ENCODE measurements at regions of chr1 and their contacts with region 1.

Region 1: GRCh38 chr1:213244664-213245091 is 193.6 kb downstream of the RPS6KC1 start:
- DNase-seq: peak; percentile 64
- H3K4me3 Mint-ChIP-seq: no peak overlapping the region
- H3K27ac Mint-ChIP-seq: no peak overlapping the region
- H3K4me1 Mint-ChIP-seq: no peaks in the 10 kb centered on the region
- H3K27me3 Mint-ChIP-seq: no peaks in the 10 kb centered on the region
- CTCF ChIP-seq: peak; percentile 77

Region 2: DNA sequence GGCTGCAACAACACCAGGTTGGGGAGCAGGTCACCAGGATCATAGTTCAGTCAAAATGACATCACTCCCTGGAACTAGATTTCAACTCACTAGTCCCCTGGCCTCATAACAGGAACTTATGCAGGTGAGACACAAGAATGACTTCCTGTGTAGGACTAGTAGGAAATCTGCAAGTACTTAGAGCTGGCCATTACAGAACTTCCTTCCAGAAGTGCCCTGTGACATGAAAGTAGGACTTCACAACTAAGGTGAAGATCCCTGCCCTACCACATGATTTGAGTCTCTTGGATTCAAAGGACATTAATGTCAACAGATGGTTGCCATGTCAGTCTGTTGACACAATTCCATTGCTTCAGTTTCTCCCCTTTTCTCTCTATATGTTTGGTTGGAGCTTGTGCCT is 29.5 kb after region 1 on chr1:
- CTCF ChIA-PET with region 1: no interaction called
- intact Hi-C with region 1: no loop called
- DNase-seq: no peak
- H3K4me3 Mint-ChIP-seq: no peak overlapping the region
- H3K27ac Mint-ChIP-seq: no peak overlapping the region
- H3K4me1 Mint-ChIP-seq: no peaks in the 10 kb centered on the region
- H3K27me3 Mint-ChIP-seq: no peaks in the 10 kb centered on the region
- CTCF ChIP-seq: no peak

Region 3: GRCh38 chr1:213374369-213374768 is 129.7 kb after region 1 on chr1:
- CTCF ChIA-PET with region 1: no interaction called
- intact Hi-C with region 1: loop called (anchors 2 kb)
- DNase-seq: peak; percentile 90
- H3K4me3 Mint-ChIP-seq: no peak overlapping the region
- H3K27ac Mint-ChIP-seq: no peak overlapping the region
- H3K4me1 Mint-ChIP-seq: peaks cover 10% of the 10 kb centered on the region
- H3K27me3 Mint-ChIP-seq: no peaks in the 10 kb centered on the region
- CTCF ChIP-seq: peak; percentile 83

Region 4: GRCh38 chr1:213419369-213420030 is 174.8 kb after region 1 on chr1:
- CTCF ChIA-PET with region 1: no interaction called
- intact Hi-C with region 1: loop called (anchors 2 kb)
- DNase-seq: no peak
- H3K4me3 Mint-ChIP-seq: no peak overlapping the region
- H3K27ac Mint-ChIP-seq: no peak overlapping the region
- H3K4me1 Mint-ChIP-seq: no peaks in the 10 kb centered on the region
- H3K27me3 Mint-ChIP-seq: peaks cover 82% of the 10 kb centered on the region
- CTCF ChIP-seq: no peak

Region 5: GRCh38 chr1:213564215-213564659 is 319.6 kb after region 1 on chr1:
- CTCF ChIA-PET with region 1: no interaction called
- intact Hi-C with region 1: loop called (anchors 10 kb)
- DNase-seq: peak; percentile 24
- H3K4me3 Mint-ChIP-seq: no peak overlapping the region
- H3K27ac Mint-ChIP-seq: no peak overlapping the region
- H3K4me1 Mint-ChIP-seq: no peaks in the 10 kb centered on the region
- H3K27me3 Mint-ChIP-seq: no peaks in the 10 kb centered on the region
- CTCF ChIP-seq: peak; percentile 18

Measured in Calu3 (cell line).